Caco-2 (cell line): ENCODE measurements at regions of chr14 and their contacts with region 1.

Region 1: GRCh38 chr14:95157327-95158189 is at the start of gene DICER1:
- DNase-seq: peak; percentile 93 to 98
- H3K4me3 ChIP-seq: peak within 1 kb of the TSS; percentile 84
- H3K4me3 Mint-ChIP-seq: peak within 1 kb of the TSS; percentile 92
- H3K27ac Mint-ChIP-seq: peak within 1 kb of the TSS; percentile 95
- H3K4me1 ChIP-seq: peaks cover 5% of the 10 kb centered on the region; the same call in 1 of the 2 replicates
- H3K4me1 Mint-ChIP-seq: peaks cover 13% of the 10 kb centered on the region
- H3K27me3 ChIP-seq: no peaks in the 10 kb centered on the region
- H3K27me3 Mint-ChIP-seq: no peaks in the 10 kb centered on the region
- CTCF ChIP-seq: no peak
- total RNA-seq, gene DICER1: 56.0 and 57.3 TPM in 2 replicates

Region 2: DNA sequence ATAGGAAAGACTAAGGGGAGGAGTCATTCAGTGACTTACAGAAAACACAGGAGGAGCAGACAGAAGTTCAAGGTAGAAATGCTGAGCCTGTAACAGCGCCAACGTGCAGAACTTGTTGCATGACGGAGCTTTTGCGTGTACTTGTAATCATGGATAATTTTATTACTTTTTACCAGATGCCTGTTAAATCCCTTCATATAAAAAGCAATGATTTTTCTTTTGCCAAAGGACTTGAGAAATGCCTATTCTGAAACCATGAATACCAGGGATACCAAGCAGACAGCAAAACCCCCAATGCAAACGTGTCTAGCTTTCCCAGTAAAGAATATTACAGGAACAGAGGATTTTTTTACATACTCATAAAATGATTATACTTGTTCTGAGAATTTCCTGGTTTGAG is 224.1 kb before region 1 on chr14:
- CTCF ChIA-PET with region 1: no interaction called
- POLR2A ChIA-PET with region 1: no interaction called
- intact Hi-C with region 1: no loop called
- DNase-seq: no peak
- H3K4me3 ChIP-seq: no peak overlapping the region
- H3K4me3 Mint-ChIP-seq: no peak overlapping the region
- H3K27ac Mint-ChIP-seq: no peak overlapping the region
- H3K4me1 ChIP-seq: no peaks in the 10 kb centered on the region
- H3K4me1 Mint-ChIP-seq: no peaks in the 10 kb centered on the region
- H3K27me3 ChIP-seq: no peaks in the 10 kb centered on the region; the same call in 1 of the 2 replicates
- H3K27me3 Mint-ChIP-seq: peaks cover 4% of the 10 kb centered on the region
- CTCF ChIP-seq: no peak

Region 3: GRCh38 chr14:95196290-95196689 is 38.7 kb after region 1 on chr14:
- CTCF ChIA-PET with region 1: no interaction called
- POLR2A ChIA-PET with region 1: interaction called, 13 read pairs
- intact Hi-C with region 1: loop called (anchors 5 kb)
- DNase-seq: peak in 1 of 2 experiments; percentile 23
- H3K4me3 ChIP-seq: no peak overlapping the region
- H3K4me3 Mint-ChIP-seq: no peak overlapping the region
- H3K27ac Mint-ChIP-seq: peak overlapping the region; percentile 46
- H3K4me1 ChIP-seq: peaks cover 32% of the 10 kb centered on the region
- H3K4me1 Mint-ChIP-seq: peaks cover 25% of the 10 kb centered on the region
- H3K27me3 ChIP-seq: no peaks in the 10 kb centered on the region
- H3K27me3 Mint-ChIP-seq: no peaks in the 10 kb centered on the region
- CTCF ChIP-seq: peak in 1 of 2 experiments; percentile 27

Region 4: DNA sequence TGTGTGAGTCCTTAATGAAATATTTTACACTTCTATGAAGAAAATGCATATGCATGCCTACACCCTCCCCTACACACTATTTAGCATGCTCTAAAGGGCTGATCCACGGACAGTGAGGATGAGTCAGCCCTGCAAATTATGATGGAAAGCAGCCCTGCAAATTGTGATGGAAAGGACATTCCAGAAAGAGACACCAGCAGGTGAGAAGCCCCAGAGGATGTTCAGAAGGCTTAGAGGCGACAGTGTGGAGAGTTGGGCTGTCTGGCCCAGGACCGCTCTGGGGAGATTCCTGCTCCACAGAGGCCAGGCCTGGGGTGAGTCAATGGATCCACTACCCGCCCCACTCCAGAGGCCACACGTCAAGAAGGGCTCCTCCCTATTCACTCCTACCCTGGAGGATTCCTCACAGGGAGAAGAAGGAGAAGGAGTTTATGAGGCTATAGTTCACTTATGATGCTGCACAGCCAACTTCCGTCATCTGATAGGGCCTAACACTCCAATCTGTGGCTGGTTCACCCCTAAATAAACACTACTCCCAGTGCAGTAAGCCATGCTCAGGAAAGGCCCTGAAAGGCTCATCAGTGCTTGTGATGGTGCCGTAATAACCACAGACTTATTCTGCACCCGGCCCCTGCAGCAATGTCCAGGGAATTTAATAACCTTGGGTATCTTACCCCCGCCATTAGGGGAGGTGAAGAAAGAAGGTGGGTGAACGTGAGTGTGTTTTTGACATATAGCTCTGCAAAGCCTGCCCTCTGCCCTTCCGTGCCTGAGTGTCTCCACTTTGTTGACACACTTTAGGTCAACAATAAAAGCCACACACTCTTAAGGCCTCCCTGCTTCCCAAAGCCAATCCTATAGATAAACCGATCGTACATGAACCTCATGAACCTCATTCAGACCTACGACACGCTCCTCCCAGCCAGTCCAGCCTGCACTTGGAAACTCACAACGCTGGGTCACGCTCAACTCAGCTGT is 115.7 kb after region 1 on chr14:
- CTCF ChIA-PET with region 1: no interaction called
- POLR2A ChIA-PET with region 1: no interaction called
- intact Hi-C with region 1: no loop called
- DNase-seq: peak in 1 of 2 experiments; percentile 41
- H3K4me3 ChIP-seq: no peak overlapping the region
- H3K4me3 Mint-ChIP-seq: peak overlapping the region; percentile 13
- H3K27ac Mint-ChIP-seq: peak overlapping the region; percentile 11
- H3K4me1 ChIP-seq: peaks cover 25% of the 10 kb centered on the region
- H3K4me1 Mint-ChIP-seq: peaks cover 18% of the 10 kb centered on the region
- H3K27me3 ChIP-seq: no peaks in the 10 kb centered on the region
- H3K27me3 Mint-ChIP-seq: no peaks in the 10 kb centered on the region
- CTCF ChIP-seq: no peak